ENCODE measurements at regions of chr19 and their contacts with region 1.

Region 1: DNA sequence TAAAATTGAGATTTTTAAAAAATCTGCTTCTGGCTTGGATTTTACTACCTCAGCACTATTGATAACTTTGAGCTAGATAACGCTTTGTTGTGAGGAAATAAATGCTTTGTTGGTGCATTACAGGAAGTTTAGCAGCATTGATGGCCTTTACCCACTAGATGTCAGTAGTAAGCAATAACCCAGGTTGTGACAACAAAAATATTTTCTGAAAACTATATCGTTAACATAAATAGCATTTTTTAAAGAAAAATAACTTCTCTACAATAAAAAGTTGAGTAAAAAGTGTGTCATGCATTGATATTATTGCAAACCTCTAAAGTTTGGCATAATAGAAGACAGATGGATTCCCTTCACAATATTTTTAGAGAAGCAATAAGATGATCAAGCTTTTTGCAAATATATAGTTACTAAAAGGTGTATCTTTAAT is 1246.5 kb downstream of the UQCRFS1 start:
- DNase-seq: peak in 1 of 14 experiments; percentile 5
- ATAC-seq: no peak
- H3K4me3 ChIP-seq: no peak overlapping the region
- H3K4me3 Mint-ChIP-seq: no peak overlapping the region
- H3K27ac ChIP-seq: no peak overlapping the region
- H3K27ac Mint-ChIP-seq: no peak overlapping the region
- H3K4me1 ChIP-seq: no peaks in the 10 kb centered on the region
- H3K4me1 Mint-ChIP-seq: no peaks in the 10 kb centered on the region
- H3K27me3 ChIP-seq: no peaks in the 10 kb centered on the region
- H3K27me3 Mint-ChIP-seq: peaks cover 10% of the 10 kb centered on the region
- CTCF ChIP-seq: peak; percentile 51

Region 2: GRCh38 chr19:28324275-28325060 is 358.1 kb after region 1 on chr19:
- CTCF ChIA-PET with region 1: no interaction called
- POLR2A ChIA-PET with region 1: no interaction called
- intact Hi-C with region 1: loop called in 1 of 2 experiments (anchors 5 kb)
- DNase-seq: no peak
- ATAC-seq: no peak
- H3K4me3 ChIP-seq: no peak overlapping the region
- H3K4me3 Mint-ChIP-seq: no peak overlapping the region
- H3K27ac ChIP-seq: no peak overlapping the region
- H3K27ac Mint-ChIP-seq: no peak overlapping the region
- H3K4me1 ChIP-seq: no peaks in the 10 kb centered on the region
- H3K4me1 Mint-ChIP-seq: no peaks in the 10 kb centered on the region
- H3K27me3 ChIP-seq: no peaks in the 10 kb centered on the region
- H3K27me3 Mint-ChIP-seq: no peaks in the 10 kb centered on the region
- CTCF ChIP-seq: no peak

Region 3: GRCh38 chr19:28710278-28710677 is 743.9 kb after region 1 on chr19:
- CTCF ChIA-PET with region 1: no interaction called
- POLR2A ChIA-PET with region 1: no interaction called
- intact Hi-C with region 1: loop called (anchors 5 to 10 kb)
- DNase-seq: peak in 3 of 14 experiments; percentile 56 to 69 (median 65)
- ATAC-seq: no peak
- H3K4me3 ChIP-seq: no peak overlapping the region
- H3K4me3 Mint-ChIP-seq: no peak overlapping the region
- H3K27ac ChIP-seq: no peak overlapping the region
- H3K27ac Mint-ChIP-seq: no peak overlapping the region
- H3K4me1 ChIP-seq: no peaks in the 10 kb centered on the region
- H3K4me1 Mint-ChIP-seq: no peaks in the 10 kb centered on the region
- H3K27me3 ChIP-seq: no peaks in the 10 kb centered on the region
- H3K27me3 Mint-ChIP-seq: peaks cover 9% of the 10 kb centered on the region
- CTCF ChIP-seq: peak; percentile 64

Region 4: GRCh38 chr19:29596885-29597525 is 1630.6 kb after region 1 on chr19:
- CTCF ChIA-PET with region 1: no interaction called
- POLR2A ChIA-PET with region 1: no interaction called
- intact Hi-C with region 1: loop called in 1 of 2 experiments (anchors 10 kb)
- DNase-seq: peak in 2 of 14 experiments; percentile 4 to 14
- ATAC-seq: no peak
- H3K4me3 ChIP-seq: no peak overlapping the region
- H3K4me3 Mint-ChIP-seq: no peak overlapping the region
- H3K27ac ChIP-seq: no peak overlapping the region
- H3K27ac Mint-ChIP-seq: no peak overlapping the region
- H3K4me1 ChIP-seq: no peaks in the 10 kb centered on the region
- H3K4me1 Mint-ChIP-seq: no peaks in the 10 kb centered on the region
- H3K27me3 ChIP-seq: peaks cover 3 to 10% of the 10 kb centered on the region in 2 experiments
- H3K27me3 Mint-ChIP-seq: peaks cover 33% of the 10 kb centered on the region
- CTCF ChIP-seq: peak; percentile 36